Activated T-helper 2 cell treated with anti-CD3 and anti-CD28 coated beads, Interferon-gamma antibody, Interleukin-2, Interleukin-4, amounts not matched to agents 10 μg/mL and 5 μg/mL and 100 μg/mL, durations not matched to agents 14 hours and 24 hours and 36 hours (primary cell): ENCODE measurements at regions of chr7 and their contacts with region 1.

Region 1: DNA sequence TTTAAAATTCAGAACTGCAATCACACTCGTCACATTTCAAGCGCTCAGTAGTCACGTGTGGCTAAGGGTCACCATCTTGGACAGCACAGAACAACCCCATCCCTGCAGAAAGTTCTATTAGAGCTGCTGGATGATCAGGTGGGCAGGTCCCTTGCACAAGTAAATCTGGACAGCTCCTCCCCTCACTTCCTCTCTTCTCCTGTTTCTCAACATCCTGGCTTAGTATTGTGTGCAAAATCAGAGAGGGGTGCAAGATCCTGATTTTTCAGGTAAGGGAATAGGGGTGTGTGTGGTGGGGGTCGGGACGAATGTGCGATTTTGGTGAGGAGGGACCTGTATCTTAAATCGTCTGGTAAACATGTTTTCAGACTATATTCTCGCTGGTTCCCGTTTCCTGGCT is at the start of gene GIMAP4:
- DNase-seq: no peak
- H3K4me3 Mint-ChIP-seq: peak within 1 kb of the TSS; percentile 89
- H3K27ac Mint-ChIP-seq: peak within 1 kb of the TSS; percentile 97
- H3K4me1 Mint-ChIP-seq: peaks cover 52% of the 10 kb centered on the region
- H3K27me3 Mint-ChIP-seq: no peaks in the 10 kb centered on the region
- total RNA-seq, gene GIMAP4: 36.7 and 39.1 TPM in 2 replicates

Region 2: GRCh38 chr7:150340024-150340749 is 227.0 kb before region 1 on chr7:
- intact Hi-C with region 1: no loop called
- DNase-seq: no peak
- H3K4me3 Mint-ChIP-seq: no peak overlapping the region
- H3K27ac Mint-ChIP-seq: no peak overlapping the region
- H3K4me1 Mint-ChIP-seq: peaks cover 9% of the 10 kb centered on the region
- H3K27me3 Mint-ChIP-seq: peaks cover 36% of the 10 kb centered on the region

Region 3: GRCh38 chr7:150448789-150449147 is 118.4 kb before region 1 on chr7:
- intact Hi-C with region 1: loop called (anchors 2 kb)
- DNase-seq: peak; percentile 81
- H3K4me3 Mint-ChIP-seq: peak overlapping the region; percentile 54
- H3K27ac Mint-ChIP-seq: peak overlapping the region; percentile 78
- H3K4me1 Mint-ChIP-seq: peaks cover 53% of the 10 kb centered on the region
- H3K27me3 Mint-ChIP-seq: no peaks in the 10 kb centered on the region

Region 4: GRCh38 chr7:150514748-150515222 is 52.4 kb before region 1 on chr7 and contains the start of gene GIMAP7:
- intact Hi-C with region 1: loop called (anchors 2 kb)
- DNase-seq: peak; percentile 63
- H3K4me3 Mint-ChIP-seq: peak within 1 kb of the TSS; percentile 89
- H3K27ac Mint-ChIP-seq: peak within 1 kb of the TSS; percentile 89
- H3K4me1 Mint-ChIP-seq: peaks cover 45% of the 10 kb centered on the region
- H3K27me3 Mint-ChIP-seq: no peaks in the 10 kb centered on the region
- total RNA-seq, gene GIMAP7: 22.6 and 24.1 TPM in 2 replicates

Region 5: DNA sequence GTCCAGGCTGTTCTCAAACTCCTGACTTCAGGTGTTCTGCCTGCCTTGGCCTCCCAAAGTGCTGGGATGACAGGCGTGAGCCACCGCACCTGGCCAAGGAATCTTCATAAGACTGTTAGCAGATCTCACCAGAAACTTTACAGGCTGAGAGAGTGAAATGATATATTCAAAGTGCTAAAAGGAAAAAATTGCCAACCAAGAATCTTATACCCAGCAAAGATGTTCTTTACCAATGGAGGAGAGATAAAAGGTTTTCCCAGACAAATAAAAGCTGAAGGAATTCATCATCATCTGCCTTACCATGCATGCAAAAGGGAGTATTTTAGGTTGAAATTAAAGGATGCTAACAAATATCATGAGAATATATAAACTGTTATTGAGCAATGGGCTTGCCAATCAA is 28.9 kb before region 1 on chr7:
- intact Hi-C with region 1: no loop called
- DNase-seq: no peak
- H3K4me3 Mint-ChIP-seq: no peak overlapping the region
- H3K27ac Mint-ChIP-seq: no peak overlapping the region
- H3K4me1 Mint-ChIP-seq: no peaks in the 10 kb centered on the region
- H3K27me3 Mint-ChIP-seq: no peaks in the 10 kb centered on the region

Region 6: DNA sequence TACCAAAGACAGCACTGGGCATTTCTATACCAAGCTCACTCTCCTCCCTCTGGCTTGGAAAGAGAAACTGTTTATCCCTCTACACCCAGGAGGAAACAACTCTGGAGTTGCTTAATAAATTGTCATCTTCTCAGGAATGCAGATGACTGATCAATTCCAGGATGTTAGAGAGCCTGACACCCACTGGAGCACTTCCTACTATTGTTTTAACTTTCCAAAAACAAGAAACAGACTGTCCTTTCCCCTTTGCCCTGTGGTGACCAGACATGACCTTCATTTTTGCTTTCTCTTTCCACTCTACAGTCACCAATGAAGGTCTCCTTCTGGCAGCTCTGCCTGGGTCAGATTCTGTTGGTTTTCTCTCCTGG is 19.6 kb after region 1 on chr7:
- intact Hi-C with region 1: loop called (anchors 2 kb)
- DNase-seq: no peak
- H3K4me3 Mint-ChIP-seq: no peak overlapping the region
- H3K27ac Mint-ChIP-seq: peak overlapping the region; percentile 79
- H3K4me1 Mint-ChIP-seq: peaks cover 31% of the 10 kb centered on the region
- H3K27me3 Mint-ChIP-seq: no peaks in the 10 kb centered on the region

Region 7: GRCh38 chr7:150610233-150610632 is 43.1 kb after region 1 on chr7:
- intact Hi-C with region 1: loop called (anchors 10 kb)
- DNase-seq: no peak
- H3K4me3 Mint-ChIP-seq: no peak overlapping the region
- H3K27ac Mint-ChIP-seq: peak overlapping the region; percentile 69
- H3K4me1 Mint-ChIP-seq: peaks cover 47% of the 10 kb centered on the region
- H3K27me3 Mint-ChIP-seq: no peaks in the 10 kb centered on the region

Region 8: DNA sequence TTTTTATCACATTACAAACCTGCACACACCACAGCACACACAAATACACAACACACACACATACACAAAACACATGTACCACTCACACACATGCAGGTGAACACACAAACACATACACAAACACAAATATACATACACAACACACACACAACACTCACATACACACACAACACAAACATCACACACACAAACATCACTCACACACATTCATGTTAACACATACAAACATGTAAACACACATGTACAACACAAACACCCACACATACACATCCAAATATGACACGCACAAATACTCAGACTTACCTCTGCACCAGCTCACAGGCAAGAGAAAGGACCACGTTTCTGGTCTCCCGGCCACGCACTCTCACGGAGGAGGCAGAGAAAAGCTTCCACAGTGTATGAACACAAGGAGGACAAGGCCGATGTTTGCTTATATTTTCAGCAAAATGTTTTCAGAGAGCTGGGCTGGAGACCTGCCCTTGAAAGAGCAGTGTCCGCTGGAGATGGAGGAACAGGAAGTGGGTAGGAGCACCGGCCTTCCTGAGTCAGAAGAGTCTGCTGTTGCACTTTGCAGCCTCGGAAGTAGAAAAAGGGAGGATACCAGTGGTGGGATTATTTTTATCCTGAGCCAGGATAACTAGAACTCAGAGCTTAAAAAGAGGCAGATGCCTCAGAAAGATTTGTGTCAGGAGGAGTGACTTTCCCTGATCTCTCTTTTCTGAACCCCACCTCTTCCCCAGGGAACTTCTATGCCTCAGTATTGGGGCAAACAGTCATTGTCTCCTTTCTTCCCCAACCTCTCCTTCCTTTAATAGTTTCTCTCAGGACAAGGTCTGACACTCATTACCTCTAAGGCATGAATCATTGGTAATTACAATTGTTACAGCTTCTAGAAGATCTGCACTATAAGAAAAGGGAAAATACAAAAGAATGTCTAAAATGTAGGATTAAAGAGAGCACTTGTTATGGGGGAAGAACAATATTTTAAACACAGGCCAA is 65.0 kb after region 1 on chr7 and contains the start of gene GIMAP6:
- intact Hi-C with region 1: loop called (anchors 5 kb)
- DNase-seq: no peak
- H3K4me3 Mint-ChIP-seq: peak within 1 kb of the TSS; percentile 90
- H3K27ac Mint-ChIP-seq: peak within 1 kb of the TSS; percentile 84
- H3K4me1 Mint-ChIP-seq: peaks cover 53% of the 10 kb centered on the region
- H3K27me3 Mint-ChIP-seq: no peaks in the 10 kb centered on the region
- total RNA-seq, gene GIMAP6: 25.8 and 29.4 TPM in 2 replicates

Region 9: DNA sequence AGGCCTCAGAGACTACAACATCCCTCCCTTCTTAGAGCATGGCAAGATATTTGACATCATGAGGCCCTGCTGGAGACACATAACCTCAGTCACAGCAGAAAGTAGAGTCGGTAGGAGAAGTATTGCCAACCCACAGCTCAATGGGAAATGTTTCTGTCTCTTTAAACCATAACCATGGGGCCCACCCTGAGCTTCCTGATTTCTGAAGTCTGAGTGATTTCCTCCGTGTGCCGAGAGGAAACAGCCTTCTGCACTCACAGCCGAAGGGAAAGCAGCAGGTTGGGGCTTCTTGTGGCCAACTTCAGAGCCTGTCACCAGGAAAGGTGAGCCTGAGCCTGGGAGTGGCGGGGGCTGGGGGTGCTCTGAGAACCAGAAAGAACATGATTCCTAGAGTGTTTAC is 149.2 kb after region 1 on chr7 and contains the start of gene GIMAP1:
- intact Hi-C with region 1: loop called (anchors 2 kb)
- DNase-seq: peak; percentile 48
- H3K4me3 Mint-ChIP-seq: peak within 1 kb of the TSS; percentile 94
- H3K27ac Mint-ChIP-seq: peak within 1 kb of the TSS; percentile 76
- H3K4me1 Mint-ChIP-seq: peaks cover 51% of the 10 kb centered on the region
- H3K27me3 Mint-ChIP-seq: no peaks in the 10 kb centered on the region
- total RNA-seq, gene GIMAP1: 3.9 and 4.5 TPM in 2 replicates

Region 10: DNA sequence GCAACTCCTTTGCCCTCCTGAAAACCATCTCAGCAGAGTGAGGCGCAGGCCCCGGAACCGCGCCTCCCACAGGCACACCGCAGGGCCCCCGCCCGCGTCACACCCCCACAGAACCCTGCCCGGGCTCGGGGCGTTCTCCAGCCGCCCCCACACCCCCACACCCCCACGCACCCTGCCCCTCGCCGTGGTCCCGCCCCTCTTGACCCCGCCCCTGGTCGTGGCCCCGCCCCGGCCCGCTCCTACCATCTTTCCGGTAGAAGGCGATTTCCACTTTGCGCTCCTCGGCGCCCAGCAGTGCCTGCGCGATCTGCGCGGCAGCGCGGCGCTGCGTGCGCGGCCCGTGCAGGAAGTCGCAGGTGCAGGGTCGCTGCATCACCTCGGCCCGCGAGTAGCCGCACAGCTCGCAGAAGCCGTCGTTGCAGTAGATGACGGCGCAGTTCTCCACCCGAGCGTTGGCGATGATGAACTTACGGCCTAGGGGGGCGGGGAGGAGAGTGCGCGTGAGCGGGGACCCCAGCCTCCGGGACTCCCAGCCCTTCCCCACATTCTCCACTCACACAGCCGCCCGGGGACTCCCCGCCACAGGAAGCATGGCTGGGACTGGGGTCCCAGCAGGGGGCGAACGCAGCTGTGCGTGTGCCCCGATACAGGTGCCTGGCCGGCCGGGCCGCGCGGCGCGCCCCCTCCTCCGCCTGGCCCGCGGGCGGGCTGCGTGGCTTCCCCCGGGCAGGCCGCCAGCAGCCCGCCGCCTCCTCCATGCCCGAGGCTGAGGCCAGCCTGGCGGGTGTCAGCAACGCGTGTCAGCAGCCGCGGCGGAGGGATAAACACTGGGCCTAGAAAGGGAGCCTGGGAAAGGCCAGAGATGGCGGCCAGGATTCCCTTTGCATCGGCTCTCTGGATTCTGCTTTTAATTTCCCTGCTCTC is 407.6 kb after region 1 on chr7:
- intact Hi-C with region 1: no loop called
- DNase-seq: peak; percentile 66
- H3K4me3 Mint-ChIP-seq: peak overlapping the region; percentile 79
- H3K27ac Mint-ChIP-seq: no peak overlapping the region
- H3K4me1 Mint-ChIP-seq: peaks cover 22% of the 10 kb centered on the region
- H3K27me3 Mint-ChIP-seq: peaks cover 36% of the 10 kb centered on the region